ENCODE measurements at regions of chr1 and their contacts with region 1.

Region 1: GRCh38 chr1:27662707-27663393 is 9.1 kb downstream of the IFI6 start:
- DNase-seq: peak; percentile 78 to 99
- H3K4me3 ChIP-seq: no peak overlapping the region
- H3K27ac ChIP-seq: 0 out of 2 replicates have a peak overlapping the region, but pooled peaks have one; percentile 5
- H3K4me1 ChIP-seq: peaks cover 4 to 20% (median 13%) of the 10 kb centered on the region in 4 experiments; a peak in 6 of 7 replicates
- H3K27me3 ChIP-seq: peaks cover 0 to 2% (median 0%) of the 10 kb centered on the region in 4 experiments; a peak in 2 of 7 replicates
- CTCF ChIP-seq: peak; percentile 74 to 91 (median 88)
- EP300 ChIP-seq: no peak
- POLR2A ChIP-seq: no peak
- RAD21 ChIP-seq: peak; percentile 94

Region 2: DNA sequence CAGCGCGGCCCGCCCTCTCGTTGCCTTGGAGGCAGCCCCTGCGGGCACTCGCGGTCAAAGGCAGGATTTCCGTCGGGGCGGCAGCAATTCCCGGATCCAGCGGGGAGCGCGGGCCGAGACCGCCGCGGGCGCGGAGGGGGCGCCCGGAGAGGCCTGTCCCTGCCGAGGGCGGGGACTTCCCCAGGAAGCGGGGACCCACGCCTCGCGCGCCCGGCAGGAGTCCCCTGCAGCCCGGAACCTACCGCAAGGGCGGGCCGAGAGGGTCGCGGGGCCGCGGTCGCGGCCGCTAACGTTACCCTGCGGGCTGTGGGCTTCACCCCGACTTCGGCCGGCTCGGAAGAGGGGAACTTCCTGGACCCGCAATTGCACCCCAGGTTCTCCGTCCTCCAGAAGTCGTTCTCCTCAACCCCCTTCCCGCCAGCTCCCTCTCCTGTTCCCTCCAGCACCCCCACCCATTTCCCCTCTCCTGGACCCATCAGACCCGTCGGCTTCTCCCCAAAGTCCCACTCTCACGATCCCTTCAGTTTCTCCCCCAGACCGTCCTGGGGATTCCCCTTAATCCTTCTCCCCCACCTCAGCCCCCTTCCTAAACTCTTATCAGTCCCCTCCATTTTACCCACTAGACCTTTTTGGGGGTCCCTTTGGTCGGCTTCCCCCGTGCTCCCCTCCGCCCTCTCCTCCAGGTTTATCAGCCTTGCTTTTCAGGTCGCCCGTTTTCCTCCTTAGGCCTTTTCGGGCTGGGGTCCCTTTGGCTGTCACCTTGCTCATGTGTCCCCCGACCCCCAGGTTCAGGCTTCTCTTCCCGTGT is 28.5 kb before region 1 on chr1:
- CTCF ChIA-PET with region 1: interaction called, 20 read pairs
- POLR2A ChIA-PET with region 1: interaction called, 4 read pairs
- DNase-seq: peak in 1 of 2 experiments; percentile 67
- H3K4me3 ChIP-seq: peak overlapping the region; percentile 31 to 62 (median 52)
- H3K27ac ChIP-seq: no peak overlapping the region
- H3K4me1 ChIP-seq: peaks cover 0 to 5% (median 2%) of the 10 kb centered on the region in 4 experiments; a peak in 5 of 7 replicates
- H3K27me3 ChIP-seq: peaks cover 19 to 36% (median 31%) of the 10 kb centered on the region in 4 experiments
- CTCF ChIP-seq: no peak
- EP300 ChIP-seq: no peak
- POLR2A ChIP-seq: no peak
- RAD21 ChIP-seq: no peak

Region 3: GRCh38 chr1:27650539-27651175 is 12.2 kb before region 1 on chr1:
- CTCF ChIA-PET with region 1: interaction called, 18 read pairs
- POLR2A ChIA-PET with region 1: interaction called, 3 read pairs
- DNase-seq: no peak
- H3K4me3 ChIP-seq: no peak overlapping the region
- H3K27ac ChIP-seq: no peak overlapping the region
- H3K4me1 ChIP-seq: peaks cover 12 to 15% (median 14%) of the 10 kb centered on the region in 4 experiments
- H3K27me3 ChIP-seq: no peaks in the 10 kb centered on the region
- CTCF ChIP-seq: no peak
- EP300 ChIP-seq: no peak
- POLR2A ChIP-seq: no peak
- RAD21 ChIP-seq: no peak

Measured in H1 (cell line).